Right ventricle myocardium inferior (tissue), 1 donor: ENCODE measurements at regions of chr5 and their contacts with region 1.

Region 1: GRCh38 chr5:139335811-139336210 is 5.8 kb upstream of the PAIP2 start:
- DNase-seq: no peak
- ATAC-seq: no peak

Region 2: GRCh38 chr5:138438724-138439476 is 896.9 kb before region 1 on chr5 and contains the start of gene REEP2:
- intact Hi-C with region 1: loop called (anchors 10 kb)
- DNase-seq: peak; percentile 73
- ATAC-seq: peak; percentile 53
- total RNA-seq, gene REEP2: 5.2 TPM